ENCODE measurements at regions of chr20 and their contacts with region 1.

Region 1: GRCh38 chr20:10090588-10091166 is 55.9 kb downstream of the ANKEF1 start:
- DNase-seq: peak in 5 of 6 donors; percentile 72 to 84 (median 78)
- ATAC-seq: peak; percentile 94 to 99 (median 98)
- H3K4me3 ChIP-seq: no peak overlapping the region
- H3K27ac ChIP-seq: peak overlapping the region in 2 of 4 donors; percentile 23 to 36
- H3K4me1 ChIP-seq: peaks cover 0 to 11% (median 6%) of the 10 kb centered on the region in 3 donors
- H3K27me3 ChIP-seq: no peaks in the 10 kb centered on the region
- CTCF ChIP-seq: peak; percentile 62 to 87 (median 70)

Region 2: DNA sequence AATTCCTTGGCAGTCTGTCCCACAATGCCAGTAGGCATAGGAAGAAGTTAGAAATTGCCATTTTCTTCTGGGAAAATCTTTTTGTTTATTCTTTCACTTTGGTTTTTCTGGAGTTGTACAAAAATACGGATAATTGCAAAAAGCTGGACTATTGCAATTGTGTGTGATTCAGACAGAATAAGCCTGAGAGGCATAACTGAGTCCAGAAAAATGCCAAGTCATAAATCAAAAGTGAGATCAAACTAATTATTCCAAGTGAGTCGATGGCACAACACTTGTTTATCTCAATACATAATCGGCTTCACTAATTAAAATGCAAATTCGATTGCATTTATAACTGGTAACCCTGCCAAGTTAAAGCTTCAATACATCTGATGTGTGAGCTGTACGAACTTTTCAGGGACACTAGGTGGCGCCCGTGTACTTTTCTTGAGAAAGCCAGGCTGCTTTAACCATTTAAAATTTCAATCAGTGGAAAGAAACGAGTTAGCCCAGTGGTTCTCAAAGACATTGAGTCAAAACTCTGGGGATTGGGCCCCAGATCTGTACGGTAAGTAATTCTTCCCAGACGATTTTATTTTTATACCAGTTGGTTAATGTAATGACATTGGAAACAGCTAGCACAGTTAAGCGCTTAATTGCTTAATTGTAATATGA is 473.7 kb before region 1 on chr20:
- intact Hi-C with region 1: loop called in 1 of 3 experiments (anchors 10 kb)
- DNase-seq: peak in 5 of 6 donors; percentile 43 to 70 (median 58)
- ATAC-seq: peak; percentile 82 to 95 (median 88)
- H3K4me3 ChIP-seq: no peak overlapping the region
- H3K27ac ChIP-seq: no peak overlapping the region
- H3K4me1 ChIP-seq: no peaks in the 10 kb centered on the region
- H3K27me3 ChIP-seq: no peaks in the 10 kb centered on the region
- CTCF ChIP-seq: peak; percentile 60 to 84 (median 74)

Region 3: GRCh38 chr20:9699181-9699580 is 391.5 kb before region 1 on chr20:
- intact Hi-C with region 1: no loop called
- DNase-seq: no peak
- ATAC-seq: peak in 1 of 4 donors; percentile 71
- H3K4me3 ChIP-seq: no peak overlapping the region
- H3K27ac ChIP-seq: no peak overlapping the region
- H3K4me1 ChIP-seq: no peaks in the 10 kb centered on the region
- H3K27me3 ChIP-seq: peaks cover 0 to 4% (median 0%) of the 10 kb centered on the region in 4 donors
- CTCF ChIP-seq: no peak

Region 4: DNA sequence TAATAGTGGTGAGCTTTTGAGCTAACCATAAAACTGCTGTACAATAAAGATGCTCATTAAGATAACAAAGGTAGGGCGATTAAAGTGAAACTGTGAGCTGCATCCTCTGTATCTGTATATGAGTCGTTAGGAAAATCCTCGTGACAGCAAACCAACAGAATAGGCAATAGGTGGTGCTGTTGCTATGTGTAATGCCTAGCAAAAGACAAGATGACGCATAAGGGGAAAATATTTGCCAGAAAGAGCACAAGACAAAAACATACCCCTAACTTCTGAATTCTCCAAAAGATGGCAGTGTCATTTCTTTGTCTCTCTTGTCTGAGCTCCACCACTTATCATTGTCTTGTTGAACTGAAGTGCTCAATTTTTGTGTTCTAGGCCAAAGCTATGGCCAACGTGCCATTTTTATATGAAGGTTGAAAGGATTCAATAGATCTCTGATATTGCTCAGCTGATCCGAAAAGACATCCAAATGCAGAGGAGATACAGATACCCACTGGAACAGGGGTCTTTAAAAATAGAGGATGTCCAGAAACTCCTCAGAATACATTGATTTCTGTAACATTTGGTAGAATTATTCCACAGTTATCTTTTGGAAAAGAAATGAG is 112.2 kb before region 1 on chr20:
- intact Hi-C with region 1: loop called in 2 of 3 experiments (anchors 5 to 10 kb)
- DNase-seq: peak in 3 of 6 donors; percentile 37 to 57 (median 52)
- ATAC-seq: peak; percentile 97 to 99 (median 98)
- H3K4me3 ChIP-seq: no peak overlapping the region
- H3K27ac ChIP-seq: no peak overlapping the region
- H3K4me1 ChIP-seq: peaks cover 0 to 4% (median 0%) of the 10 kb centered on the region in 3 donors
- H3K27me3 ChIP-seq: no peaks in the 10 kb centered on the region
- CTCF ChIP-seq: peak; percentile 32 to 66 (median 60)

Measured in pancreas (tissue), 10 donors.